Activated CD4-positive, alpha-beta T cell treated with anti-CD3 and anti-CD28 coated beads for 36 hours (primary cell): ENCODE measurements at regions of chr21 and their contacts with region 1.

Region 1: GRCh38 chr21:15064576-15065391 is at the start of gene NRIP1:
- DNase-seq: peak; percentile 85
- ATAC-seq: peak; percentile 72
- H3K4me3 Mint-ChIP-seq: peak within 1 kb of the TSS; percentile 87
- H3K27ac Mint-ChIP-seq: peak within 1 kb of the TSS; percentile 94
- H3K4me1 Mint-ChIP-seq: peaks cover 44% of the 10 kb centered on the region
- H3K27me3 Mint-ChIP-seq: peaks cover 6% of the 10 kb centered on the region
- total RNA-seq, gene NRIP1: 7.3 to 7.7 TPM

Region 2: DNA sequence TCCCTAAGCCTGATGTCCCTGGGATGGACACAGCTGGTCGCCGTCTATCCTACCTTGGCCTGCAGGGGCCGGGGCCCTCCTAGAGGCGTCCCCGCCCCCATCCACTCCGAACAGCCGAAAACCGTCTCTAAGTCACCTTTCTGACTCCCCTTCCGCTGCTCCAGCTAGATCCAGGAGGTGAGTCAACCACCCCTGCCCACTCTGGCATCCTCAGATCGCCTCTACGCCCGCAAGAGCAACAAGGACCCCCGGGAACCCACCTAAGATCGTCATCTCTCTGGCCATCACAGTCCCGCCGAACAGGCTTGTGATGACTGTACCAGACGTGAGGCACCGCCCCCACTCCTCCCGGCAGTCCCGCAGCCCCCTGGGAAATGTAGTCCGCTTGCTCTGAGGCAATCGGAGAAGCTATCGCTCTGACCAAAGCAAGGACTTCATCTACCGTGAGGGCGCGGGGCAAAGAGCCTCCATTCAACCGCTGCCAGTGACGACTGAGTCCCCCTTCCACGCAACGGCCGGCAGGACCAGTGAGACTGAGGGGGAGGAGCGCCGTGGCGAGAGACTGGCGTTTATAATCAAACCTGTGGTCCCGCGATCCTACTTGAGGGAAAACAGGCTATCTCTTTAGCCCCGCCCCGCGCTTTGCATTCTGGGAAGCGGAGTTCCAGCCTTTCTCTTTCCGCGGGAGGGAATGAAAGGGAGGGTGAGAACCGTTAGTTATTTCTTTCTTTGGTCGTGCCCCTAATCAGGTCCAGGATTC is 681.8 kb before region 1 on chr21 and contains the start of gene HSPA13:
- CTCF ChIA-PET with region 1: no interaction called
- POLR2A ChIA-PET with region 1: no interaction called
- intact Hi-C with region 1: loop called (anchors 1 to 2 kb)
- DNase-seq: peak; percentile 99
- ATAC-seq: peak; percentile 97
- H3K4me3 Mint-ChIP-seq: peak within 1 kb of the TSS; percentile 90
- H3K27ac Mint-ChIP-seq: peak within 1 kb of the TSS; percentile 98
- H3K4me1 Mint-ChIP-seq: peaks cover 29% of the 10 kb centered on the region
- H3K27me3 Mint-ChIP-seq: no peaks in the 10 kb centered on the region
- total RNA-seq, gene HSPA13: 29.5 to 50.2 TPM

Region 3: DNA sequence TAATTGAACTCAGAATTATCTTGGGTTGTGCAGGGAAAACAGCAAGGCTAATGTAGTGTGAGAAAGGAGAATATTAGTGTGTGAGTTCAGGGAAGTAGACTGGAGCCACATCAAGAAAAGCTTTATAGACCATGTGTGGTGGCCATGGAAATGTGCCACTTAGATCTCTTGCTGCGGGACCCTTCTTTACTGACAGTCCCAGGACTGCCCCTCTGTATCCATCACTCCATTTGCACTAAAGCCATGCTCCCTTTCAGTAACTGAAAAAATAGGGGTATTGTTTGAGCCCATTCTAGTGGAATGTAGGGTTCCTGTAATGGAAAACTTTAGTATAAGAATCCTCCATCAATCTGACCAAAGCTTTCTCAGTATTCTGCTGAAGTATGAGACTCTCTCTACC is 551.0 kb before region 1 on chr21:
- CTCF ChIA-PET with region 1: no interaction called
- POLR2A ChIA-PET with region 1: no interaction called
- intact Hi-C with region 1: no loop called
- DNase-seq: no peak
- ATAC-seq: no peak
- H3K4me3 Mint-ChIP-seq: no peak overlapping the region
- H3K27ac Mint-ChIP-seq: no peak overlapping the region
- H3K4me1 Mint-ChIP-seq: peaks cover 20% of the 10 kb centered on the region
- H3K27me3 Mint-ChIP-seq: no peaks in the 10 kb centered on the region

Region 4: DNA sequence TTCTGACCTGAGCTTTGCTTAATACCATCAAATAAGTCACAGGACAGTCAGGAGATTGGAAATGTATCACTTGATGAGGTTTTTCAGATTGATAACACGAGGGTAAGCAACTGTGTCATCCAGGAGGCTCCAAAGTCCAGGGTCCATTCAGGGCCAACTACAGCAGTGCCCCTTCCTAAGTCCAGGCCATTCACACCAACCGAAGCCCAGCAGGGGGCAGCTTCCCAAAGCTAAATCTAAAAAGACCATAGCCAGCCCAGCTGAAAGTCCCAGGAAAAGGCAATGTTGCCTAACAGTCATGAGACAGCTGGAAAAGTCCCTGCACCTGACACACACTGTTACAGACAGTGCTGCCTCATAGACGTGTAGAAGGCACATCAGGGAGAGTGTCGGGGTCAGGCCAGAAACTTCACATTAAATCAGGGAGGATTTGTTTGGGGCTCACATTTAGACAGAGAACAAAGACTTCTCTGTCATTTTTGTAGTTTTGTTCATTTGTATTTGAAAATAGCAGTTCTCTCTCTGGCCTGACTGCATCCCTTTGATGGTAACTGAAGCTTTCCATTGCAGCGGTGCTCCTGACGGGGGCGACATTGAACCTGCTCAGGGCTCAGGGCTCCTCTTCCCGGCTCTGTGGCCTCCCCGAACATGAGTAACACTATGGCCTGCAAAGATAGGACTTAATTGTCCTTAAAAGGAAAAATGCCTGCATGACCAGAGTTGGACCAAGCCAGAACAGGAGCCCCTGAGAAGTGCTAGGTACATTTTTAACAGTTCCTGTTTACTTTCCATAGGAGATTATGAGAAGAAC is 200.4 kb before region 1 on chr21:
- CTCF ChIA-PET with region 1: no interaction called
- POLR2A ChIA-PET with region 1: no interaction called
- intact Hi-C with region 1: loop called in 1 of 2 experiments (anchors 2 kb)
- DNase-seq: peak; percentile 77
- ATAC-seq: peak; percentile 88
- H3K4me3 Mint-ChIP-seq: no peak overlapping the region
- H3K27ac Mint-ChIP-seq: no peak overlapping the region
- H3K4me1 Mint-ChIP-seq: peaks cover 6% of the 10 kb centered on the region
- H3K27me3 Mint-ChIP-seq: peaks cover 2% of the 10 kb centered on the region

Region 5: GRCh38 chr21:15221799-15222386 is 157.1 kb after region 1 on chr21:
- CTCF ChIA-PET with region 1: no interaction called
- POLR2A ChIA-PET with region 1: no interaction called
- intact Hi-C with region 1: loop called (anchors 1 to 5 kb)
- DNase-seq: peak; percentile 52
- ATAC-seq: peak; percentile 80
- H3K4me3 Mint-ChIP-seq: no peak overlapping the region
- H3K27ac Mint-ChIP-seq: no peak overlapping the region
- H3K4me1 Mint-ChIP-seq: peaks cover 14% of the 10 kb centered on the region
- H3K27me3 Mint-ChIP-seq: peaks cover 4% of the 10 kb centered on the region

Region 6: DNA sequence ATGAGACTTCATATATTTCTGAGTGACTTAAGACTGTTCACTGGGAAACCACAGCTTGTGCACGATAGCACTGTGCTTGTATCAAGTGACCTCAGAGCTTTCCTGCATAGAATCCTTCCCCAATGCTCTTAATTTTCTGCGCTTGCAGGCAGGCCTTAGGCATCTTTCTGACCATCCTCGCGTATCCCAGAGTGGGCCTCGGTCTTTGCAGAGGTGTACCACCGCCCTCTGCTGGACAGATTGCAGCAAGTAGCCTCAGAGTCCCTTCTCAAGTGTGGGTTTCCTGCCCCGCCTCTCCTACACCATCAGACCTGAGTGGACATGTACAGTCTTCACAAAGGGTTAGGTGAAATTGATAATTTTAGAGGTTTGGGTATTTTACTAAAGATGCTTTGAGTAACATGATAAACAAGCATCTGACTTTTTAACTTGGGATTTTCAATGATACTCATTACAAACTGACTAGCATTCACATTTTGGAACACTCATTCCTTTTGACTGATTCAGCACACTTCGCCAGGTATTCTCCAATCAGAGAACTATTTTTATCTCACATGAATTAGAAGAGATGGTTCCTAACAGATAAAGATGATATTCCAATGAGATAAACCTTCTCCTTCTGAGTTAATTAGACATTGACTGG is 418.5 kb after region 1 on chr21:
- CTCF ChIA-PET with region 1: interaction called, 3 read pairs
- POLR2A ChIA-PET with region 1: no interaction called
- intact Hi-C with region 1: loop called (anchors 2 kb)
- DNase-seq: peak; percentile 90
- ATAC-seq: peak; percentile 95
- H3K4me3 Mint-ChIP-seq: no peak overlapping the region
- H3K27ac Mint-ChIP-seq: no peak overlapping the region
- H3K4me1 Mint-ChIP-seq: peaks cover 21% of the 10 kb centered on the region
- H3K27me3 Mint-ChIP-seq: no peaks in the 10 kb centered on the region

Region 7: GRCh38 chr21:15729674-15730483 is 665.1 kb after region 1 on chr21 and contains the start of gene USP25:
- CTCF ChIA-PET with region 1: no interaction called
- POLR2A ChIA-PET with region 1: no interaction called
- intact Hi-C with region 1: loop called (anchors 2 to 5 kb)
- DNase-seq: peak; percentile 90
- ATAC-seq: peak; percentile 82
- H3K4me3 Mint-ChIP-seq: peak within 1 kb of the TSS; percentile 90
- H3K27ac Mint-ChIP-seq: peak within 1 kb of the TSS; percentile 90
- H3K4me1 Mint-ChIP-seq: peaks cover 25% of the 10 kb centered on the region
- H3K27me3 Mint-ChIP-seq: peaks cover 4% of the 10 kb centered on the region
- total RNA-seq, gene USP25: 31.8 to 35.8 TPM

Region 8: GRCh38 chr21:16667395-16667794 is 1602.6 kb after region 1 on chr21:
- CTCF ChIA-PET with region 1: no interaction called
- POLR2A ChIA-PET with region 1: no interaction called
- intact Hi-C with region 1: no loop called
- DNase-seq: no peak
- ATAC-seq: no peak
- H3K4me3 Mint-ChIP-seq: no peak overlapping the region
- H3K27ac Mint-ChIP-seq: no peak overlapping the region
- H3K4me1 Mint-ChIP-seq: no peaks in the 10 kb centered on the region
- H3K27me3 Mint-ChIP-seq: no peaks in the 10 kb centered on the region